CD14-positive monocyte (primary cell): ENCODE measurements at regions of chr10 and their contacts with region 1.

Region 1: DNA sequence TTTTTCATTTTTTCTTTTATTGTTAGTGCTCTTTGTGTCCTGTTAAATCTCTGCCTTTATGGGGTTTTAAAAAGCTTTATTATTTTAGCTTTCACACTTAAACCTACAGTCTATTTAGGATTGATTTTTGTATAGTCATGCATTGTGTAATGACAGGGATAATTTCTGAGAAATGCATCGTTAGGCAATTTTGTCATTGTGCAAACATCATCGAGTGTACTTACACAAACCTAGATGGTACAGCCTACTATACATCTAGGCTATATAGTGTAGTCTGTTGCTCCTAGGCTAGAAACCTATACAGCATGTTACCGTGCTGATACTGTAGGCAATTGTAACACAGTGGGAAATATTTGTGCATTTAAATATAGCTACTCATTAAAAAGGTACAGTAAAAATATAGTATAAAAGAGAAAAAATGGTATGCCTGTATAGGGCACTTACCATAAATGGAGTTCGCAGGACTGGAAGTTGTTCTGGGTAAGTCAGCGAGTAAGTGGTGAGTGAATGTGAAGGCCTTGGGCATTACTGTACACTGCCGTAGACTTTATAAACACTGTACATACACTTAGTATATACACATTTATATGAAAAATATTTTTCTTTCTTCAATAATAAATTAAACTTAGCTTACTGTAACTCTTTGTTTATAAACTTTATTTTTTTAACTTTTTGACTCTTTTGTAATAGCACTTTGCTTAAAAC is 16.0 kb downstream of the UBE2D1 start:
- DNase-seq: peak; percentile 56 to 88 (median 80)
- H3K4me3 ChIP-seq: peak overlapping the region in 1 of 3 experiments; percentile 55
- H3K4me3 Mint-ChIP-seq: peak overlapping the region in 1 of 2 donors; percentile 78
- H3K27ac ChIP-seq: peak overlapping the region; percentile 2 to 81
- H3K27ac Mint-ChIP-seq: peak overlapping the region; percentile 89 to 97 (median 95)
- H3K4me1 ChIP-seq: peaks cover 56 to 70% of the 10 kb centered on the region in 2 donors
- H3K4me1 Mint-ChIP-seq: peaks cover 72% of the 10 kb centered on the region
- H3K27me3 ChIP-seq: no peaks in the 10 kb centered on the region
- H3K27me3 Mint-ChIP-seq: no peaks in the 10 kb centered on the region
- CTCF ChIP-seq: no peak

Region 2: DNA sequence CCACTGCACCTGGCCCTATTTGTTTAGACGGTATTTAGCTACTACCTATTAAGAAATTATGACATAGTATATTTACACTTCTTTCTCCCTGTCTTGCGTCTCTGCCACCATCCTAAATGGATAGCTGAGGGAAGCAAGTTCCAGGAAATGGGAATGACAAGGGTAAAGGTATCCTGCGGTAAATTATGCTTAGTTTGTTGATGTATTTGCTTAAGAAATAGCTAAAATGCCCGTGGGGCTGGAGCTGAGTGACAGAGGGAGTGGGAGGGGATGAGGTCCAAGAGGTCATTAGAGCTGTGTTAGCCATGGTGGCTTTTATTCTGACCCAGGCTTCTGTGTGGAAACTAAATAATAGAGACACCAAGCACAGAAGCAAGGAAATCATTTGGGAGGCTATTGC is 45.0 kb before region 1 on chr10:
- intact Hi-C with region 1: loop called in 1 of 2 experiments (anchors 5 kb)
- DNase-seq: no peak
- H3K4me3 ChIP-seq: no peak overlapping the region
- H3K4me3 Mint-ChIP-seq: no peak overlapping the region
- H3K27ac ChIP-seq: no peak overlapping the region
- H3K27ac Mint-ChIP-seq: no peak overlapping the region
- H3K4me1 ChIP-seq: no peaks in the 10 kb centered on the region
- H3K4me1 Mint-ChIP-seq: peaks cover 3% of the 10 kb centered on the region
- H3K27me3 ChIP-seq: peaks cover 12 to 21% of the 10 kb centered on the region in 2 donors
- H3K27me3 Mint-ChIP-seq: peaks cover 12 to 18% (median 14%) of the 10 kb centered on the region in 3 donors
- CTCF ChIP-seq: no peak

Region 3: GRCh38 chr10:58593008-58593407 is 242.2 kb after region 1 on chr10:
- intact Hi-C with region 1: no loop called
- DNase-seq: peak; percentile 44 to 61 (median 57)
- H3K4me3 ChIP-seq: peak overlapping the region in 2 of 3 experiments; percentile 20 to 67
- H3K4me3 Mint-ChIP-seq: peak overlapping the region; percentile 76 to 77
- H3K27ac ChIP-seq: peak overlapping the region; percentile 46 to 84
- H3K27ac Mint-ChIP-seq: peak overlapping the region; percentile 67 to 96 (median 90)
- H3K4me1 ChIP-seq: peaks cover 33 to 40% of the 10 kb centered on the region in 2 donors
- H3K4me1 Mint-ChIP-seq: peaks cover 47% of the 10 kb centered on the region
- H3K27me3 ChIP-seq: no peaks in the 10 kb centered on the region
- H3K27me3 Mint-ChIP-seq: peaks cover 0 to 4% (median 0%) of the 10 kb centered on the region in 3 donors
- CTCF ChIP-seq: no peak